MCF 10A (cell line): ENCODE measurements at regions of chr7 and their contacts with region 1.

Region 1: GRCh38 chr7:121994625-121995410 is 121.9 kb downstream of the PTPRZ1 start:
- DNase-seq: peak; percentile 86
- H3K4me3 Mint-ChIP-seq: no peak overlapping the region
- H3K27ac Mint-ChIP-seq: no peak overlapping the region
- H3K4me1 Mint-ChIP-seq: no peaks in the 10 kb centered on the region
- H3K27me3 Mint-ChIP-seq: no peaks in the 10 kb centered on the region
- CTCF ChIP-seq: peak; percentile 67

Region 2: GRCh38 chr7:121126801-121127534 is 867.9 kb before region 1 on chr7:
- CTCF ChIA-PET with region 1: no interaction called
- POLR2A ChIA-PET with region 1: no interaction called
- intact Hi-C with region 1: loop called (anchors 1 kb)
- DNase-seq: peak; percentile 39
- H3K4me3 Mint-ChIP-seq: no peak overlapping the region
- H3K27ac Mint-ChIP-seq: no peak overlapping the region
- H3K4me1 Mint-ChIP-seq: no peaks in the 10 kb centered on the region
- H3K27me3 Mint-ChIP-seq: no peaks in the 10 kb centered on the region
- CTCF ChIP-seq: peak; percentile 39

Region 3: DNA sequence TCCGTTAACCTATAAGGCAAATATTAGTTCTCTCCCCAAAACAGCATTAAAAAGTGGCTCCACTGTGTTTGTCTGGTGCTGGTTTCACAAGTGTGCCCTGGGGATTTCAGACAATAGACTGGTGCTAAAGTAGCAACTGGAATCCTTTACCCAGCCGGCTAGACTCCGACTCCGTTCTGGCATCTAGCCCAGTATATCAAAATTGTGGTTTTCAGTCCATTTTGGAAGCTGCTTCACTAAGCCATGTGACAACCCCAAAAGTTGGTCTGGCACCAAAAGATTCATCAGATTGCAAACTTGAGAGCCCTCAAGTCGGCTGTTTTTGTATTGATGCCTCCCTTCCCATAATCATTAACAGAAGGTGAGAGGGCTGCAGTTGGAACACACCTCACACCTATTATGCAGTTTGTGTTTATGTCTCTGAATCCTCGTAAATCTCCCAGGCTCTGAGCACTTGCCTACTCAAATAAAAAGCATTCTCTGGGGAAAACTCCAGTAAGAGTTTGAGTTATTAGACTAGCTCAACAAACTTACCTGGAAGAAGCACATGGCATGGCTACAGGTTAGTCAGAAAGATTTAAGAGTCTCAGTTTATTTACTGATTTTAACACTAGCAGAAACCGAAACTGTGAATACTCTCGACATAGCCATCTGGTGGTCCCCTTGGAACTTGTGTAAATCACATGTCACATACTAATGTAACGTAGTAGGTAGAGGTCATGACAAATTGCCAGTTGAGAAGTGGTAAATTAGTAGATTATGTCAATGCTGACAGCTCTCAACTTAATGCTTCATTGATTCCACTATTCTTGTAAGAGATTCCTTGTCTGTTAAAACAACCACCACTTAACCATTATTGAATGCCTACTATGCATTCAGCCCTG is 680.8 kb before region 1 on chr7:
- CTCF ChIA-PET with region 1: no interaction called
- POLR2A ChIA-PET with region 1: no interaction called
- intact Hi-C with region 1: no loop called
- DNase-seq: peak; percentile 65
- H3K4me3 Mint-ChIP-seq: no peak overlapping the region
- H3K27ac Mint-ChIP-seq: no peak overlapping the region
- H3K4me1 Mint-ChIP-seq: peaks cover 19% of the 10 kb centered on the region
- H3K27me3 Mint-ChIP-seq: peaks cover 22% of the 10 kb centered on the region
- CTCF ChIP-seq: no peak

Region 4: DNA sequence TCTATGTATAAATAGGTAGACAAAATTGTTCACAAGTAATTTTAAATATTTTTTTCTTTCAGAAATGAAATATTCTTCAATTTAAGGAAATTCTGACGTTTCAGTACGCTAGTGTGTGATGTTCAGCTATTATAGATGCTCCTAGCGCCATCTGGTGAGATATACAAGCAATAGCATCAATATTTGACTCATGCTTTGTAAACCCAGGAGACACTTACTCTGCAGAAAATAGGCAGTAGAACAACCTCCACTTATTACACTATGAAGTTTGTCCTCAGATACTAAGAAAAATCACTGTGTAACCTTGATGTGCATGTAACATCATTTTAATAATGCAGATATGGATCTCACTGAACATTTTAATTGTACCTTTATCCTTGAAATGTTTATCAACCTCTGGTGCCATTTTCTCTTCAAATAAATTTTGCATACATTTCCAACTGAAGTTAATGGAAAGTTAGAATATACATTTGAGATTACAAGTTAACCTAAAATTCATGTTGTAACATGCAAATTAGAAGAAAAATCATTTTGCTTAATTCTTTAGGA is 447.2 kb before region 1 on chr7:
- CTCF ChIA-PET with region 1: interaction called, 31 read pairs
- POLR2A ChIA-PET with region 1: interaction called, 4 read pairs
- intact Hi-C with region 1: loop called (anchors 1 kb)
- DNase-seq: peak; percentile 68
- H3K4me3 Mint-ChIP-seq: no peak overlapping the region
- H3K27ac Mint-ChIP-seq: no peak overlapping the region
- H3K4me1 Mint-ChIP-seq: peaks cover 16% of the 10 kb centered on the region
- H3K27me3 Mint-ChIP-seq: no peaks in the 10 kb centered on the region
- CTCF ChIP-seq: peak; percentile 71

Region 5: DNA sequence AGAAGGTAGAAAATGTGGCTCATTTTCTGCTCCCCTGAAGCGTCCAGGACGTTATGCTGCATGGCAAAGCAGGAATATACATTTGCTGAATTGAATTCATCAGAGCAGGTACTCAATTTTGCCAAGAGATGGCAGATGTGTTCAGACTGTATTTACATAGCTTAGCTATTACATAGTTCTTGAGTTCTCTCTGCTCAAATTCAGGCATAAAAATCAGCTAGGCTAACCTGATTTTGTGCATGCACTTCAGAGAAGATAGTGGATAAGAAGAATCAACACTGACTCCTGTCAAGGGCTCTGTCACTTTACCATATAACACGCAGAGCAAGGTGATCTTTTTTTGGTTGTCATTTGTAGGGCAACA is 389.5 kb before region 1 on chr7:
- CTCF ChIA-PET with region 1: interaction called, 157 read pairs
- POLR2A ChIA-PET with region 1: interaction called, 15 read pairs
- intact Hi-C with region 1: loop called (anchors 1 kb)
- DNase-seq: peak; percentile 28
- H3K4me3 Mint-ChIP-seq: no peak overlapping the region
- H3K27ac Mint-ChIP-seq: no peak overlapping the region
- H3K4me1 Mint-ChIP-seq: peaks cover 13% of the 10 kb centered on the region
- H3K27me3 Mint-ChIP-seq: no peaks in the 10 kb centered on the region
- CTCF ChIP-seq: peak; percentile 33

Region 6: DNA sequence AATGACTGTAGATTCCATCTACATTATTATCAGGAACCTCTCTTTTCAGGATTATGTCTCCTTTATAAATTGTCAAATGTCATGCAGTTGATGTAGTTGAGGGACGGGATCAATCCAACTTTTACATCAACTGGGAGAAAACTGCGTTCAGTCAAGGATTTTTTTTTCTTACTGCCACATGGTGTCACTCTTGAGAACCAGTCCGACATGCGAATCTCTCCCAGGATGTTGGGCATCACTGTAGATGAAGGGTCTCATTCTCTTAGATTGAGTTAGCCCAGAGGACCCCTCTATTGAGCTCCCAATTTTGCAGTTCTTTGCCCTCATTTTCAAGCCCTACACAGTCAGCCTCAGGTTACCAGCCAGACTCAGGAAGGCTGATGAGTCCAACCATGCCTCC is 242.1 kb before region 1 on chr7:
- CTCF ChIA-PET with region 1: interaction called, 112 read pairs
- POLR2A ChIA-PET with region 1: interaction called, 7 read pairs
- intact Hi-C with region 1: loop called (anchors 1 kb)
- DNase-seq: peak; percentile 43
- H3K4me3 Mint-ChIP-seq: no peak overlapping the region
- H3K27ac Mint-ChIP-seq: no peak overlapping the region
- H3K4me1 Mint-ChIP-seq: no peaks in the 10 kb centered on the region
- H3K27me3 Mint-ChIP-seq: no peaks in the 10 kb centered on the region
- CTCF ChIP-seq: peak; percentile 39

Region 7: GRCh38 chr7:121924269-121925186 is 70.3 kb before region 1 on chr7:
- CTCF ChIA-PET with region 1: no interaction called
- POLR2A ChIA-PET with region 1: no interaction called
- intact Hi-C with region 1: no loop called
- DNase-seq: no peak
- H3K4me3 Mint-ChIP-seq: no peak overlapping the region
- H3K27ac Mint-ChIP-seq: no peak overlapping the region
- H3K4me1 Mint-ChIP-seq: no peaks in the 10 kb centered on the region
- H3K27me3 Mint-ChIP-seq: no peaks in the 10 kb centered on the region
- CTCF ChIP-seq: no peak

Region 8: DNA sequence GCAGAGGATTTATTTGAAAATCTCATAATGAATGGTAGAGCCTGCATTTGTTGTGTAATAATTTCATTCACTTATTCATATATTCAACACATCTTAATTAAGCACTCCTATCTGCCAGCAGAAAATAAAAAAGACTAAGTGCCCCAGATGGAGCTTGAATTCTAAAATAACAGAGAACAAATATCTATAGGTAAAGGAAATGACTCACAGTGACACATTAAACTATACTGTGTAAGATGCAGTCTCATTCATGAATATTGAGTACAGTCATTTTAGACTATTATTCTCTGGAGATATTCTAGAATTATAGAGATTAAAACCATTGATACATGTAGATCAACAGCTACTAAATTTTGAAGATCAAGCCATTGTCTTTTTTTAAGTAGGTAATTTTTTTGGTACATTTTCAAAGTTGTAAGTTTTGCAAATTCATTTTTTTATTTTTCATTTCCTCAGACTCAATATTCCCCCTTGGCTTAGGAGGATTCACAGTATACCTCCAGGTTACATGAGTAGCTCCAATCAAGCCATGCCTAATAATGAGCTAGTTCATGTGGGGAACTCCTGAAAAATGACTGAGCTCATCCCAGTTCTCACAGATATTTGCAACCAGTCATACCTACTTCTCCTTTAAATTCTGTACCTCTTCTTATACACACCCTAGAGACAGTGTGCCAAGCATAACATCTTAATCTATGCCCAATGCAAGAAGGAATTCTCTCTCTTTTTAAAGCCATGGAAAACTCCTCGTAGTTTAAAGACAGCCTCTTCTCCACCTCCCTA is 49.6 kb before region 1 on chr7:
- CTCF ChIA-PET with region 1: interaction called, 12 read pairs
- POLR2A ChIA-PET with region 1: no interaction called
- intact Hi-C with region 1: no loop called
- DNase-seq: peak; percentile 60
- H3K4me3 Mint-ChIP-seq: peak overlapping the region; percentile 63
- H3K27ac Mint-ChIP-seq: peak overlapping the region; percentile 69
- H3K4me1 Mint-ChIP-seq: peaks cover 22% of the 10 kb centered on the region
- H3K27me3 Mint-ChIP-seq: no peaks in the 10 kb centered on the region
- CTCF ChIP-seq: no peak

Region 9: GRCh38 chr7:122006687-122007086 is 11.9 kb after region 1 on chr7:
- CTCF ChIA-PET with region 1: interaction called, 15 read pairs
- POLR2A ChIA-PET with region 1: no interaction called
- intact Hi-C with region 1: no loop called
- DNase-seq: peak; percentile 20
- H3K4me3 Mint-ChIP-seq: no peak overlapping the region
- H3K27ac Mint-ChIP-seq: no peak overlapping the region
- H3K4me1 Mint-ChIP-seq: peaks cover 11% of the 10 kb centered on the region
- H3K27me3 Mint-ChIP-seq: no peaks in the 10 kb centered on the region
- CTCF ChIP-seq: no peak